ENCODE measurements at regions of chr22 and their contacts with region 1.

Region 1: DNA sequence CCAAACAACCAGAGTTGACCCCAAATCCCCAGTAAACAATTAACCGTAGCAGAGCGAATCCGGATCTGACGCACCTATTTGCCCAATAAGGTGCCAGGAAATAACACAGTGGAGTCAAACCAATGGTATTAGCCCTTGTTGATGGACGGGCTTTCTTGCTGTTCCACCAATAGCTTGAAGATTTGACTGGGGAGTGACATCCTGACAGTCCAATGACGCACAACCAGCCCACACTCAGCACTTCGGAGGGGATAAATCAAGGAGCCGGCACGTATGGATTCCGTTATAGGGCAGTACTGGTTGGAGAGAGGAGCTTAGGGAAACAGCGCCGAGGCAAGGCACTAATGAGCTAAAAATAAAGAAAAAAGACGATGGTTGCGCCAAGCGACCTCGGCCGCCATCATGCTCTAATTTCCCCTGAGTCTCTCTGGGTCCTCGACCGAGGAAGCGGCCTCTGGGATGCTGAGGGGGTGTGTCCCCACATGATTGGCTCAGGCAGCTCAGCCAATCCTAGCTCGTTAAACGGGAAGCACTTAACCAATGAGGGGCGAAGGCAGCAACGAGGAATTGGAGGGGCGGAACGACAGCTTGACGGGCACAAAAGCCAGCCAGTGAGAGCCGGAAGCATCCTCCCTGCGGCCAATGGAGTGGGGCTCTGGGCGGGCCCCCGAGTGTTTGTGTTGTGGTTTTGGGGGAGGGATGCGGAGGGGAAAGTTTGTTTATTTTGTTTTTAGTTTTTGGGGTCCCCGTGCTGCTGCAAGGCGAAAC is 49.5 kb downstream of the FAM83F start:
- DNase-seq: peak; percentile 98
- ATAC-seq: peak; percentile 91
- H3K4me3 Mint-ChIP-seq: peak overlapping the region; percentile 87
- H3K27ac Mint-ChIP-seq: peak overlapping the region; percentile 99
- H3K4me1 Mint-ChIP-seq: peaks cover 24% of the 10 kb centered on the region
- H3K27me3 Mint-ChIP-seq: peaks cover 2% of the 10 kb centered on the region

Region 2: GRCh38 chr22:40009292-40009769 is 35.0 kb before region 1 on chr22:
- CTCF ChIA-PET with region 1: no interaction called
- POLR2A ChIA-PET with region 1: no interaction called
- intact Hi-C with region 1: no loop called
- DNase-seq: no peak
- ATAC-seq: no peak
- H3K4me3 Mint-ChIP-seq: peak overlapping the region; percentile 63
- H3K27ac Mint-ChIP-seq: peak overlapping the region; percentile 66
- H3K4me1 Mint-ChIP-seq: peaks cover 19% of the 10 kb centered on the region
- H3K27me3 Mint-ChIP-seq: peaks cover 4% of the 10 kb centered on the region

Region 3: DNA sequence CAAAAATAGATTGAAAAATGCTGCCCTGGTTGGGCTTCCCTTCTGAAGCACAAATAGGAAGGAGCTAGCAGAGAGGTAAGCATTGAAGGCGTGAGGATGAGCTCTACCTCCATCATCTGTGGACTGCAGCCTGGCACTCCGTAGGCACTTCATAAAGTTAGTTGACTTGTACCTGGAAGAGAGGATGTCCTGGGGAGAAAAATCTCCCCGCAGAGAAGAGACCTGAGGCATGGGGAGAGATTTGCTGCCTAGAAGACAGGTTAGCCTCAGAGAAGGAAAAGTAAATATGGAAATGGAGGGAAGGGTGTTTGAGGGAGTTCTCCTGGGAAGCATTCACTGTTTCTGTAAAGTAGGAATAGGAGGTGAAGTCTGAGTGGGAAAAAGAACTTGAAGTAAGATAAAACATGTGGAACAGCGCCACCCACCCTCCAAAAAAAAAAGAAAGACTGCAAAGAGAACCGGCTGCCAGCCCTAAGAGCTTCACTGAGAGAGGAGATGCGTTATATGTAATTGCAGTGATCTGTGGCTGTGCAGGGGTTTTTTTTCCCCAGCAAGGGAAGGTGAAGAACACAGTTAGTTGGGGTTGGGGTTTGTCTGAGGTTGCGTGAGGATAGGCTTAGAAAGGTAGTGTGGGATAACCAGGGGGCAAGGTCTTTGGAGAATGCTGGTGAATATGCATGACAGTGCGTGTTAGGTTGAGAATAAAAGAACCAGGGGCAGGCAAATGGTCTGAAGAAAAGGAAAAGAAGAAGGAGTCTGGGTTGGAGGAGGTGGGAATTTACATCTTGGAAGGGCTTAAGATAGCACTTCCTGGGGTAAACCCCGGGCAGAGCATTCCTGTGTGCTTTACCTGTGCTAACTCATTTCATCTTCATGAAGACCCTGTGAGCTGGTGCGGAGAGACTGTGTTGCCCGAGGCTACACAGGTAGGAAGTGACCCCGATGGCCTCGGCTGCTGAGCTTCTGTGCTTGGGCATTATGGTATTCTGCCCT is 149.4 kb after region 1 on chr22:
- CTCF ChIA-PET with region 1: no interaction called
- POLR2A ChIA-PET with region 1: interaction called, 6 read pairs
- intact Hi-C with region 1: loop called in 1 of 2 experiments (anchors 1 kb)
- DNase-seq: no peak
- ATAC-seq: no peak
- H3K4me3 Mint-ChIP-seq: no peak overlapping the region
- H3K27ac Mint-ChIP-seq: peak overlapping the region; percentile 72
- H3K4me1 Mint-ChIP-seq: peaks cover 86% of the 10 kb centered on the region
- H3K27me3 Mint-ChIP-seq: no peaks in the 10 kb centered on the region

Measured in activated CD4-positive, alpha-beta T cell treated with anti-CD3 and anti-CD28 coated beads for 36 hours (primary cell).